Activated CD8-positive, alpha-beta T cell treated with anti-CD3 and anti-CD28 coated beads for 36 hours (primary cell): ENCODE measurements at regions of chr19 and their contacts with region 1.

Region 1: GRCh38 chr19:3075895-3076431 is 13.7 kb upstream of the TLE5 start:
- DNase-seq: peak; percentile 83
- ATAC-seq: peak; percentile 94
- H3K4me3 Mint-ChIP-seq: no peak overlapping the region
- H3K27ac Mint-ChIP-seq: no peak overlapping the region
- H3K4me1 Mint-ChIP-seq: peaks cover 2% of the 10 kb centered on the region
- H3K27me3 Mint-ChIP-seq: no peaks in the 10 kb centered on the region
- CTCF ChIP-seq: peak; percentile 86

Region 2: DNA sequence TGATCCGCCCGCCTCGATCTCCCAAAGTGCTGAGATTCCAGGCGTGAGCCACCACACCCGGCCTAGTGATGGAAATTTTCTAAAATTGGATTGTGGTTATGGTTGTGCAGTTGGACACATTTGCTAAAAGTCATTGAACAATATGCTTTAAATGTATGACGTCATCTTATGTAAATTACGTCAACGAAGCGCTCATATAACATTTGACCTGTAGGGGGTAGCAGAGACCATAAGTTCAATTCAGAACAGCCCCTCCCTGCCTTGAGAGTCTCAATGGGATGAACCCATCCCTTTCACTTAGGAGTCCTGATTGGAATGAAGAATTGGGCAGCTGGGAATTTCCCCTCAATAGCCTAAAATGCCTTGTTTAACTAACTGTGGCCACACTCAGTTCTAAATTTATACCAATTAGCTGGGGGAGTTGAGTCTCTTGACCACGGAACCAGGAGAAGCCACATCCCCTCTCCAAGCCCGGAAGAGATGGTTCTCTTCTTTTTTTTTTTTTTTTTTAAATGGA is 113.9 kb before region 1 on chr19:
- CTCF ChIA-PET with region 1: interaction called, 20 read pairs
- POLR2A ChIA-PET with region 1: interaction called, 3 read pairs
- intact Hi-C with region 1: no loop called
- DNase-seq: peak; percentile 65
- ATAC-seq: peak; percentile 84
- H3K4me3 Mint-ChIP-seq: no peak overlapping the region
- H3K27ac Mint-ChIP-seq: no peak overlapping the region
- H3K4me1 Mint-ChIP-seq: peaks cover 3% of the 10 kb centered on the region
- H3K27me3 Mint-ChIP-seq: no peaks in the 10 kb centered on the region
- CTCF ChIP-seq: peak; percentile 81

Region 3: DNA sequence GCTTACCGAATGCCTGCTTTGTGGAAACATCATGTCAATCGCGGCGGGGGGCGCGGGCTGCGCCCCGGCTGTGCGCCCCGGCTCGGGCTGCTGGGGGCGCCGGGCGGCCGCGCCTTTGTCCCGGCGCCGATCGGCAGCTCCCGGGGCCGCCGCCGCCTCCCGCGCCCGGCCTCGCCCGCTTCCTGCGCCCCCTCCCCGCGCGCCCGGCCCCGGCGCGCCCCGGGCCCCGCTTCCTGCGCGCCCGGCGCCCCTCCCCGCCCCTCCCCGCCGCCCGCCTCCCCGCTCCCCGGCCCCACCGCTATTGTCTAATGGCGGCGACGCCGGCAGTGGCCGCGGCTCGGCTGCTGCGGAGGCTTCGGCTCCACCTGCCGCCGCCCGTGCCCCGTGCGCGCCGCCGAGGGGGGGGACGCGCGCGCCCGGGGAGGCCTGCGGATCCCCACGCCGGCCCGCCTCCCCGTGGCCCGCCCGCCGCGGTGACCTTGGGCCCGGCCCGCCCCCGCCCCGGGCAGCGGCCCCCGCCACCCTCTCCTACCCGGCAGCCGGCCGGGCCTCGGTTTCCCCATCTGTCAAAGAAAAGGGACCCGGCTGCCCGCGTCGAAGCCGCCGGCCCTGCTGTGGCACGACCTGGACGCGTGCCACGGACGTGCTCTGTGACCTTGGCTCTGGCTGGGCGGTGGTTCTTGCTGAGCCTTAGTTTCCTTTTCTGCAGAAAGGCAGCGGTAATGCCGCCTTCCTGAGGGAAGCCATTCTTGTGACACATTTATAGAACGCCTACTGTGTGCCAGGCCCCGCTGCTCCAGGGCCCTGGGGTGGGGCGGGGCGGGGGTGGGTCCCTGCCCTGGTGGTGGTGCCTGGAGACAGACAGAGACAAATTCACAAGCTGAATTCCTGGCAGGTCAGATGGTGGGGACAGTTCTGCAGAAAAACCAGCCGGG is 13.5 kb before region 1 on chr19 and contains the start of gene TLE5:
- CTCF ChIA-PET with region 1: interaction called, 12 read pairs
- POLR2A ChIA-PET with region 1: no interaction called
- intact Hi-C with region 1: no loop called
- DNase-seq: peak; percentile 65
- ATAC-seq: peak; percentile 55
- H3K4me3 Mint-ChIP-seq: peak within 1 kb of the TSS; percentile 80
- H3K27ac Mint-ChIP-seq: peak within 1 kb of the TSS; percentile 94
- H3K4me1 Mint-ChIP-seq: peaks cover 29% of the 10 kb centered on the region
- H3K27me3 Mint-ChIP-seq: no peaks in the 10 kb centered on the region
- CTCF ChIP-seq: no peak
- total RNA-seq, gene TLE5: 283 to 296 TPM